ENCODE measurements at regions of chr11 and their contacts with region 1.

Region 1: DNA sequence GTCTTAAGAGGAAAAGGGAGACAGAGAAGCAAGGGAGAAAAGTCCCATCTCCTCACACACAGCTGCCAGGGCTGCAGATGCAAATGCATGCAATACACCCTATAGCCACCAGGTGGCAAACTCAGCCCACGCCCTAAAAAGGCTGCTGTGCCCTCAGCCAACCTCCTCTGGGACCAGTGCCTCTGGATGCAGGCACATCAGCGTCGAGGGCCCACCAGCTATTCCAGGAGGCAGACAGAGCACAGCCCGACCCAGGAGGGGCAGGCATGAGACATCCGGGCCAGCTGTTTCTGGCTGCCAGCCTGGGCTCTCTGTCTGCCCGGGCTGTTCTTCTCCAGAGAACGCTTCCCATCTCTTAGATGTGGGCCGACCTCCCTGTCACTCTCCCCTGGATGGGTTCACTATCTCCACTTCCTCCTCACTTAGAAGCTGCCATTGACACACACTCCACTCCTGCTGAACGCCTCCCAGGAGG is 39.7 kb downstream of the TPBGL start:
- DNase-seq: peak; percentile 90
- ATAC-seq: peak; percentile 95
- H3K4me3 ChIP-seq: no peak overlapping the region
- H3K27ac ChIP-seq: no peak overlapping the region
- H3K4me1 ChIP-seq: no peaks in the 10 kb centered on the region
- H3K27me3 ChIP-seq: no peaks in the 10 kb centered on the region
- CTCF ChIP-seq: peak; percentile 97

Region 2: GRCh38 chr11:74791333-74792100 is 488.7 kb before region 1 on chr11:
- CTCF ChIA-PET with region 1: no interaction called
- POLR2A ChIA-PET with region 1: no interaction called
- intact Hi-C with region 1: no loop called
- DNase-seq: no peak
- ATAC-seq: no peak
- H3K4me3 ChIP-seq: no peak overlapping the region
- H3K27ac ChIP-seq: no peak overlapping the region
- H3K4me1 ChIP-seq: no peaks in the 10 kb centered on the region
- H3K27me3 ChIP-seq: no peaks in the 10 kb centered on the region
- CTCF ChIP-seq: no peak

Region 3: GRCh38 chr11:75195121-75195551 is 85.1 kb before region 1 on chr11:
- CTCF ChIA-PET with region 1: no interaction called
- POLR2A ChIA-PET with region 1: no interaction called
- intact Hi-C with region 1: no loop called
- DNase-seq: no peak
- ATAC-seq: no peak
- H3K4me3 ChIP-seq: no peak overlapping the region
- H3K27ac ChIP-seq: no peak overlapping the region
- H3K4me1 ChIP-seq: no peaks in the 10 kb centered on the region
- H3K27me3 ChIP-seq: peaks cover 53% of the 10 kb centered on the region
- CTCF ChIP-seq: no peak

Region 4: DNA sequence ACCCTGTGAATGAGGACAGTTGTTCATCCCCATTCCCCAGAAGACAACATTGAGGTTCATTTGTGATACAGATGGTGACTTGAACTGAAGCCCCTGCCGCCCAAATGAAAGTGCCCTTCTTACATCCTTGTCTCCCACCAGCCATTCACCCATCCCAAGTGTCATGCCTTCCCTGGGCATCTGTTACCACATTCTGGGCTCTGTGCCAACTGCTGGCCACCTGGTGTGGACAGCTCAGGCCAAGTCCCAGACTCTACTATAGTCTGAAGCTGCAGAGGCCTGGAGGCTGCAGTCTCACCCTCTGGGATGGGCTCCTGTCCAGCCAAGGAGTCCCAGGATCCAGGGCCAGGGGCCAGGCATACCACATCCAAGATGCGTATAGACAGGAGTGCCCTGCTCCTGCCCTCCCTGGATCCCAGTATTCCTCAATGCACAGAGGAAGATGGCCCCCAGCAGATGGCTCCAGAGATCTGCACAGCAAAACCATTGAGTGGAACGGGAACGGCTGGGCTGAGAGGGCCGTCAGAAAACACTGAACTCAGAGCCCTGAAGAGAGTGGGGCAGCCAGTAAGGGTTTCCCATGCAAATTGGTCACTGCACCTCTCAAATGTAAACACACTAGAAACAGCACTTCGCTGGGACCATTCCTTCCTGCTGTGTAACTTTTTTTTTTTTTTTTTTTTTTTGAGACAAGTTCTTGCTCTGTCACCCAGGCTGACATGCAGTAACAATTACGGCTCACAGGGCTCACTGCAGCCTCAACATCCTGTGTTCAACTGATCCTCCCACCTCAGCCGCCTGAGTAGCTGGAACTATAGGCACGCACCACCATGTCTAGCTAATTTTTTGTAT is 48.4 kb after region 1 on chr11:
- CTCF ChIA-PET with region 1: interaction called, 6 read pairs
- POLR2A ChIA-PET with region 1: no interaction called
- intact Hi-C with region 1: loop called (anchors 2 kb)
- DNase-seq: peak; percentile 85
- ATAC-seq: peak; percentile 69
- H3K4me3 ChIP-seq: no peak overlapping the region
- H3K27ac ChIP-seq: no peak overlapping the region
- H3K4me1 ChIP-seq: peaks cover 30% of the 10 kb centered on the region
- H3K27me3 ChIP-seq: no peaks in the 10 kb centered on the region
- CTCF ChIP-seq: peak; percentile 93